ENCODE measurements at regions of chr5 and their contacts with region 1.

Region 1: DNA sequence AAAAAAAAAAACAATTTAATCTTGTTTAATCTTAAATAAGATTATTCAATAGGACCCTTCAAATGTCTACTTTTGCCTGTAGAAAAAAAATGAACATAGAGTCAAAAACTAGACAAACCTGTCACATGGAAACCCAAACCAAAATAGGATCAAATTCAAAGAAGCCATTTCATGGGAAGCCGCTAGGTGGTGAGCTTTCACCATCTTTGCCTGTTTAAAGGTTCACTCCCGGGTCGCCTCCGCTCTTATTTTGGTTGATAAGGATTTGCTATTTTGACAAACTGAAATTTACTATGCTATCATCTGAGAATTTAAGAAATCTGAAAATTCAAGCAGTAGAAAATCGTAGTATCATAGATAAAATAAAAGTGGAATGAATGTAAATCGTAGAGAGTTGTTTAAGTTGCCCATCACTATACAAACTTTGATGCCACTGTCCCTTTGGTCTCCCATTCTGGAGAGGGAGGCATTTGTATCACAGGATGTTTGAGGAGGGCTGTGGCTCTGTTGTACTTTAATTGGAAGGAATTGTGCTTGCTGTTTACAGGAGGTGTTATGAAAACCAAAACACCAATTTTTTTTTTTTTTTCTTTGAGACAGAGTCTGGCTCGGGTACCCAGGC is 43.5 kb upstream of the DNAH5 start:
- DNase-seq: peak; percentile 49
- H3K4me3 ChIP-seq: no peak overlapping the region
- H3K27ac ChIP-seq: no peak overlapping the region
- H3K4me1 ChIP-seq: peaks cover 21% of the 10 kb centered on the region
- H3K27me3 ChIP-seq: no peaks in the 10 kb centered on the region
- CTCF ChIP-seq: peak; percentile 86 to 91

Region 2: GRCh38 chr5:14086261-14086660 is 98.3 kb after region 1 on chr5:
- CTCF ChIA-PET with region 1: no interaction called
- dilution Hi-C with region 1: no loop called
- in situ Hi-C with region 1: no loop called
- intact Hi-C with region 1: no loop called
- DNase-seq: no peak
- H3K4me3 ChIP-seq: no peak overlapping the region
- H3K27ac ChIP-seq: no peak overlapping the region
- H3K4me1 ChIP-seq: no peaks in the 10 kb centered on the region
- H3K27me3 ChIP-seq: no peaks in the 10 kb centered on the region
- CTCF ChIP-seq: no peak

Region 3: GRCh38 chr5:14351845-14352712 is 364.1 kb after region 1 on chr5:
- CTCF ChIA-PET with region 1: no interaction called
- dilution Hi-C with region 1: no loop called
- in situ Hi-C with region 1: loop called in 1 of 2 experiments (anchors 25 kb)
- intact Hi-C with region 1: no loop called
- DNase-seq: peak; percentile 43
- H3K4me3 ChIP-seq: no peak overlapping the region
- H3K27ac ChIP-seq: no peak overlapping the region
- H3K4me1 ChIP-seq: peaks cover 12% of the 10 kb centered on the region
- H3K27me3 ChIP-seq: no peaks in the 10 kb centered on the region
- CTCF ChIP-seq: peak; percentile 97 to 98

Region 4: GRCh38 chr5:14364576-14365472 is 376.9 kb after region 1 on chr5:
- CTCF ChIA-PET with region 1: no interaction called
- dilution Hi-C with region 1: loop called (anchors 5 kb)
- in situ Hi-C with region 1: loop called in 1 of 2 experiments (anchors 25 kb)
- intact Hi-C with region 1: loop called (anchors 1 kb)
- DNase-seq: peak; percentile 15
- H3K4me3 ChIP-seq: no peak overlapping the region
- H3K27ac ChIP-seq: no peak overlapping the region
- H3K4me1 ChIP-seq: peaks cover 6% of the 10 kb centered on the region
- H3K27me3 ChIP-seq: no peaks in the 10 kb centered on the region
- CTCF ChIP-seq: peak; percentile 75 to 76

Region 5: GRCh38 chr5:14664302-14665100 is 676.5 kb after region 1 on chr5 and contains the start of gene OTULIN:
- CTCF ChIA-PET with region 1: no interaction called
- dilution Hi-C with region 1: no loop called
- in situ Hi-C with region 1: loop called (anchors 10 to 25 kb)
- intact Hi-C with region 1: no loop called
- DNase-seq: peak; percentile 91
- H3K4me3 ChIP-seq: peak within 1 kb of the TSS; percentile 68 to 81 (median 73)
- H3K27ac ChIP-seq: peak within 1 kb of the TSS; percentile 74
- H3K4me1 ChIP-seq: peaks cover 39% of the 10 kb centered on the region
- H3K27me3 ChIP-seq: no peaks in the 10 kb centered on the region
- CTCF ChIP-seq: no peak
- total RNA-seq, gene OTULIN: 45.6 to 56.0 TPM

Measured in mammary epithelial cell (primary cell).